ENCODE measurements at regions of chr3 and their contacts with region 1.

Region 1: GRCh38 chr3:168165390-168166269 is 69.9 kb upstream of the GOLIM4 start:
- DNase-seq: peak; percentile 19
- H3K4me3 ChIP-seq: no peak overlapping the region
- H3K27me3 ChIP-seq: no peaks in the 10 kb centered on the region
- CTCF ChIP-seq: peak; percentile 64

Region 2: GRCh38 chr3:168030577-168030976 is 135.1 kb before region 1 on chr3:
- CTCF ChIA-PET with region 1: interaction called, 11 read pairs
- POLR2A ChIA-PET with region 1: no interaction called
- DNase-seq: no peak
- H3K4me3 ChIP-seq: no peak overlapping the region
- H3K27me3 ChIP-seq: no peaks in the 10 kb centered on the region
- CTCF ChIP-seq: no peak

Region 3: GRCh38 chr3:168040607-168041208 is 124.9 kb before region 1 on chr3:
- CTCF ChIA-PET with region 1: interaction called, 217 read pairs
- POLR2A ChIA-PET with region 1: no interaction called
- DNase-seq: no peak
- H3K4me3 ChIP-seq: no peak overlapping the region
- H3K27me3 ChIP-seq: no peaks in the 10 kb centered on the region
- CTCF ChIP-seq: peak; percentile 78

Region 4: GRCh38 chr3:168047190-168047795 is 118.3 kb before region 1 on chr3:
- CTCF ChIA-PET with region 1: interaction called, 217 read pairs
- POLR2A ChIA-PET with region 1: no interaction called
- DNase-seq: peak; percentile 52
- H3K4me3 ChIP-seq: no peak overlapping the region
- H3K27me3 ChIP-seq: no peaks in the 10 kb centered on the region
- CTCF ChIP-seq: peak; percentile 71

Region 5: DNA sequence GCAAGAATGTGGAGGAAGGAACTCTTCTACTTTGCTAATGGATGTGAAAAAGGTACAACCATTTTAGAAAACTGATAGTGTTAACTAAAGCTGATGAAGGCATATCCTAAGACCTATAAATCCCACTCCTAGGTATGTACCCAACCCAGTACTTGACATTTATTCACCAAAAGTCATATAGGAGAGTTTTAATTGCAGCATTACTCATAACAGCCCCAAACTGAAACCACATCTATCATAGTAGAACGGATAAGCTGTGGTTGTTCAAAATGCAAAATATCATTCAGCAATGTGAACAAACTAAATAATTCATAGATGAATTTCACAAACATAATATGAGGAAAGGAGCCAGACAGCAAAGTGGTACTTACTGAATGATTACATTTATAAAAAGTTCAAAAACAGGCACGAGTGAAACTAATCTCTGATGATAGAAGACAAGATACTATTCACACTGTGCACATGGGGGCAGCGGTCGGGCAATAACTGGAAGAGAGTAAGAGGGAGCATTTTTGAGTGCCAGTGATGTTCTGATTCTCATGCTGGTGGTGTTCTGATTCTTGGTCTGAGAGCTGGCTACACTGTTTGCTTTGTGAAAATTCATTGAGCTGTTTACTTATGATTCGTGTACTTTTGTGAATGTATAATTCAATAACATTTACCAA is 104.2 kb before region 1 on chr3:
- CTCF ChIA-PET with region 1: interaction called, 11 read pairs
- POLR2A ChIA-PET with region 1: no interaction called
- DNase-seq: no peak
- H3K4me3 ChIP-seq: no peak overlapping the region
- H3K27me3 ChIP-seq: no peaks in the 10 kb centered on the region
- CTCF ChIP-seq: 0 out of 2 replicates have a peak, but pooled peaks have one; percentile 10

Region 6: GRCh38 chr3:168081171-168081771 is 84.4 kb before region 1 on chr3:
- CTCF ChIA-PET with region 1: interaction called, 11 read pairs
- POLR2A ChIA-PET with region 1: no interaction called
- DNase-seq: peak; percentile 13
- H3K4me3 ChIP-seq: no peak overlapping the region
- H3K27me3 ChIP-seq: no peaks in the 10 kb centered on the region
- CTCF ChIP-seq: no peak

Region 7: GRCh38 chr3:168095611-168096209 is 69.9 kb before region 1 on chr3 and contains the start of gene GOLIM4:
- CTCF ChIA-PET with region 1: interaction called, 20 read pairs
- POLR2A ChIA-PET with region 1: no interaction called
- DNase-seq: peak; percentile 88
- H3K4me3 ChIP-seq: peak within 1 kb of the TSS; percentile 89
- H3K27me3 ChIP-seq: no peaks in the 10 kb centered on the region
- CTCF ChIP-seq: no peak
- polyA plus RNA-seq, gene GOLIM4: 32.4 and 35.1 TPM in 2 replicates

Measured in BJ (cell line).